Gastrocnemius medialis (tissue), 4 donors: ENCODE measurements at regions of chr19 and their contacts with region 1.

Region 1: DNA sequence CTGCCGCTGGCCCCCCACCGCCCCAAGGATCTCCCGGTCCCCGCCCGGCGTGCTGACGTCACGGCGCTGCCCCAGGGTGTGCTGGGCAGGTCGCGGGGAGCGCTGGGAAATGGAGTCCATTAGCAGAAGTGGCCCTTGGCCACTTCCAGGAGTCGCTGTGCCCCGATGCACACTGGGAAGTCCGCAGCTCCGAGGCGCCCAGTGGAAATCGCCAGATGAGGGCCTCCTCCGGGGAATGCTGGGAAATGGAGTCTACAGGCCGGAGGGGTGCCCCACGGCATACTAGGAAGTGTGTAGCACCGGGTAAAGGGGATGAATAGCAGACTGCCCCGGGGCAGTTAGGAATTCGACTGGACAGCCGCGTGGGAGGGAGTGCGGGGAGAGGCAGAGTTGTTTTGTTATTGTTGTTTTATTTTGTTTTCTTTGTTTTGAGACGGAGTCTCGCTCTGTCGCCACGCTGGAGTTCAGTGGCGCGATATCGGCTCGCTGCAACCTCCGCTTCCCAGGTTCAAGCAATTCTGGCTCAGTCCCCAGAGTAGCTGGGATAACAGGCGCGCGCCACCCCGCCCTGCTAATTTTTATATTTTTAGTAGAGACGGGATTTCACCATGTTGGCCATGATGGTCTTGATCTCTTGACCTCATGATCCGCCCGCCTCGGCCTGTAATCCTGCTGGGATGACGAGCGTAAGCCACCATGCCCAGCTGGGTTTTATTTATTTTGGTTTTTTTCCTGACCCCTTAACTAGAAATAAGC is at the start of gene PPP1R12C:
- DNase-seq: peak; percentile 98
- ATAC-seq: peak; percentile 81 to 90
- H3K4me3 ChIP-seq: peak within 1 kb of the TSS; percentile 80 to 90 (median 85)
- H3K27ac ChIP-seq: peak within 1 kb of the TSS; percentile 74 to 88 (median 86)
- H3K4me1 ChIP-seq: peaks cover 35 to 44% of the 10 kb centered on the region in 2 donors
- H3K27me3 ChIP-seq: no peaks in the 10 kb centered on the region
- CTCF ChIP-seq: peak in 1 of 5 experiments; percentile 25
- POLR2A ChIP-seq: peak; percentile 29 to 36
- total RNA-seq, gene PPP1R12C: 22.6 to 28.2 (median 26.2) TPM

Region 2: DNA sequence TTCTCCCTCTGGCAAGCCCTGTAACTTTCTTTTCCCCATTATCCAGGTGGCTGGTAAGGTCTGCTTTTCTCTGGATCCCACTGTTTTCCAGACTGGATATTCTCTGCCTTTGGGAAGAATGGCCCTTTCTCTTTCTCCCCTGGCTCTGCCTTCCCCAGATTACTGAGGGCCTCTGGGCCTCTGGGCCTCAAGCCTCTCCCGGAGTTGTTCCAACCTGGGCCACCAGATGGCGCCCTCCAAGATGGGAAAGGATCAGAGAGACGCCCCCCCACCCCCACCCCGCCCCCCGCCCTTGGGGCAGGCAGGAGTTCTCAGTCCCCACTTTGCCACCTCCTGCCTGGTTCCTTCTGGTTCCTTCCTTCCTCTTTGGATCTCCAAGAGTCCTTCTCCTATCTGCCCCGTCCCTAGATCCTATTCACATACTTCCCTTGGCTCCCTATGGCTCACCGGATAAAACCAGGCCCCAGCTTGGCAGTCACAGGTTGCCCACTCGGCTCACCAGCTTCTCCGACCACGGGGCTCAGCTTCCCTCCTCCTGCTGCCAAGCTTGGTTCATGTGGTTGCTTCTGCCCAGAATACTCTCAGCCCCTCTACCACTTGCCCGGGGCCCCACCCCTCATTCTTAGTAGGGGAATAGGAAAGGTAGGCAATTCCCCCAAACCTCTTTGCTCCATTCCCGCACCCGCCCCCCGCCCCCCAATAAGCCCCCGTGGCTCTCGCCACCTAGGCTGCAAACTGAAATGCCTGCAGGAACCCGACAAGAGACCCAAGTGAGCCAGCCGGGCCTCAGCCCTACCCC is 29.1 kb before region 1 on chr19:
- in situ Hi-C with region 1: no loop called
- intact Hi-C with region 1: loop called (anchors 2 kb)
- DNase-seq: no peak
- ATAC-seq: peak in 1 of 2 donors; percentile 29
- H3K4me3 ChIP-seq: no peak overlapping the region
- H3K27ac ChIP-seq: peak overlapping the region in 3 of 4 donors; percentile 16 to 33 (median 18)
- H3K4me1 ChIP-seq: peaks cover 13 to 24% of the 10 kb centered on the region in 2 donors
- H3K27me3 ChIP-seq: peaks cover 36 to 39% (median 39%) of the 10 kb centered on the region in 3 donors
- CTCF ChIP-seq: peak; percentile 18 to 89 (median 52)
- POLR2A ChIP-seq: no peak

Region 3: DNA sequence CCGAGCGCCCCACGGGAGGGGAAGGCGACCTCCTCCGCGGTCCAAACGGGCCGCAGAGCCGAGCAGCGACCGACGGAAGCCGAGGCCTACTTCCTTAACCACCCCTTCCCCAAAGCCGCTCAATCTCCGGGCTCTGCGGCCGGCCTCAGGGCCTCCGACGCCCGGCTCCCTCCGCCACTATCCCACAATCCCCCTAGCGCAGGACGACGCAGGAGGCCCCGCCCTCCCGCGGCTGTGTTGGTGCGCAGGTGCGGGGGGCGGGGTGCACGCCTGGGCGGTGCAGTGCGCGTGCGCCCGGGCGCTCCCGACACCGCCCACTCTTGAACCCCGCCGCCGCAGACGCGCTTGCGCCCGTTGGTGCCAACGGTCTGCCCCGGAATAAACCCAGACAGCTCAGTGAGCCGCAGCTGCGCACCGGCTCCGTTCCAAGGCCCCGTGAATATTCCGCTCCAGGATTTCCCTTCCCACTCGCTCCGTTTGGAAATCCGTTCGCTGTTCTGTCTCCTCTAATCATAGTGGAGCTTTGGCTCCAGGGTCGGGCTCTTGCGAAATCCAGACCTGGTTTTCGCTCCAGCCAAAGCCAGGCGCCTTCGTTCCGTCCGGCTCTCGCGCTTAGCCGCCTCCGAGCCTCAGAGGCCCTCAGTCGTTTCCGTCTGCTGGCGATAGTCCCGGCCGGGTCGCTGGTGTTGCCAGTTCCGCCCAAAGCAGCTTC is 141.2 kb after region 1 on chr19 and contains the start of gene PPP6R1:
- in situ Hi-C with region 1: no loop called
- intact Hi-C with region 1: loop called (anchors 1 kb)
- DNase-seq: peak; percentile 95 to 99
- ATAC-seq: peak; percentile 97 to 98
- H3K4me3 ChIP-seq: peak within 1 kb of the TSS; percentile 74 to 90 (median 80)
- H3K27ac ChIP-seq: peak within 1 kb of the TSS; percentile 89 to 97 (median 94)
- H3K4me1 ChIP-seq: peaks cover 42 to 49% of the 10 kb centered on the region in 2 donors
- H3K27me3 ChIP-seq: no peaks in the 10 kb centered on the region
- CTCF ChIP-seq: peak in 2 of 5 experiments; percentile 38 to 52
- POLR2A ChIP-seq: peak; percentile 86 to 88
- total RNA-seq, gene PPP6R1: 14.6 to 47.9 (median 39.6) TPM

Region 4: DNA sequence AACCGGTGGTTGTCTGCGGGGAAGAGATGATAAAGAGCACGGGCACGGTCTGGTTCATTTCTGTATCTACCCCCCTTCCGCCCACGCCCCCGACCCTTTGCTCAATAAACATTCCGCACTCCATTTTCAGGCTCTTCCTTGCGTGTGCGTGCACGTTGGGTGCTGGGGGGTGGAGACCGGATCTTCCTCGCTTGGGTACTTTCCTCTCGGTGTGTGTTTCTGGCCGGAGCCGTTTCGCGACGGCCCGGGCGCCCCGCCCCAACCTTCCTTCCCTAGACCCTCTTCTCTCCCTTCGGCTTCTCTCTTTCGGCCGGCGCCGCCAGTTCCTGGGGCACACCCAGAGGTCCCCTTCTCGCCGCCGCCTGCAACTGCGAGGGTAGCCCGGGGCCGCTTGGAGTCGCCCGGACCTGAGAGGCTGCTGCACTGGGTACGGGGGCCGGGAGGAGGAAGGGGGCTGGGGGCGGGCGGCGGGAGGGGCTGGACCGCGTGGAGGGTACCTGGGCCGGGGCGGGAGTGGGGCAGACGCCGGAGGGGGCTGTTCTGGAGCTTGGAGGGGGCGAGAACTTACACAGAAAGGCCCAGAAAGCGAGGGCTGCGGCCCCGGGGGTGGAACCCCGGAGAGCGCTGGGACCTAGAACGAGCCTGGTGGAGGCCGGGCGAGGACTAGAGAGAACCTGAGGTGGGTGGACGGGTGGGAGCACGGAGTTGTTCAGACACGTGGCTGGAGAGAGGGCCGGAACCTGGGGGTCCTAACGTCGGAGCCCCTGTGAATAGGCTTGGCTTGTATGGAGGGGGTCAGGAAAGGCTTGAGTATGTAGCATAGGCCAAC is 525.7 kb after region 1 on chr19 and contains the start of gene ZNF581:
- in situ Hi-C with region 1: no loop called
- intact Hi-C with region 1: loop called (anchors 5 kb)
- DNase-seq: peak; percentile 35 to 63
- ATAC-seq: peak; percentile 47 to 51
- H3K4me3 ChIP-seq: peak within 1 kb of the TSS; percentile 80 to 99 (median 94)
- H3K27ac ChIP-seq: peak within 1 kb of the TSS; percentile 82 to 98 (median 90)
- H3K4me1 ChIP-seq: peaks cover 52 to 61% of the 10 kb centered on the region in 2 donors
- H3K27me3 ChIP-seq: no peaks in the 10 kb centered on the region
- CTCF ChIP-seq: peak in 1 of 5 experiments; percentile 13
- POLR2A ChIP-seq: peak in 1 of 2 donors; percentile 11
- total RNA-seq, gene ZNF581: 9.9 to 17.3 (median 13.7) TPM

Region 5: GRCh38 chr19:55674841-55675660 is 557.2 kb after region 1 on chr19 and contains the start of gene EPN1:
- in situ Hi-C with region 1: no loop called
- intact Hi-C with region 1: loop called (anchors 1 kb)
- DNase-seq: peak; percentile 95
- ATAC-seq: peak; percentile 93
- H3K4me3 ChIP-seq: peak within 1 kb of the TSS; percentile 76 to 89 (median 84)
- H3K27ac ChIP-seq: peak within 1 kb of the TSS; percentile 77 to 95 (median 87)
- H3K4me1 ChIP-seq: peaks cover 31 to 38% of the 10 kb centered on the region in 2 donors
- H3K27me3 ChIP-seq: no peaks in the 10 kb centered on the region
- CTCF ChIP-seq: peak in 2 of 5 experiments; percentile 7 to 8
- POLR2A ChIP-seq: peak; percentile 57 to 70
- total RNA-seq, gene EPN1: 58.7 to 214 (median 190) TPM